ENCODE measurements at regions of chr1 and their contacts with region 1.

Region 1: DNA sequence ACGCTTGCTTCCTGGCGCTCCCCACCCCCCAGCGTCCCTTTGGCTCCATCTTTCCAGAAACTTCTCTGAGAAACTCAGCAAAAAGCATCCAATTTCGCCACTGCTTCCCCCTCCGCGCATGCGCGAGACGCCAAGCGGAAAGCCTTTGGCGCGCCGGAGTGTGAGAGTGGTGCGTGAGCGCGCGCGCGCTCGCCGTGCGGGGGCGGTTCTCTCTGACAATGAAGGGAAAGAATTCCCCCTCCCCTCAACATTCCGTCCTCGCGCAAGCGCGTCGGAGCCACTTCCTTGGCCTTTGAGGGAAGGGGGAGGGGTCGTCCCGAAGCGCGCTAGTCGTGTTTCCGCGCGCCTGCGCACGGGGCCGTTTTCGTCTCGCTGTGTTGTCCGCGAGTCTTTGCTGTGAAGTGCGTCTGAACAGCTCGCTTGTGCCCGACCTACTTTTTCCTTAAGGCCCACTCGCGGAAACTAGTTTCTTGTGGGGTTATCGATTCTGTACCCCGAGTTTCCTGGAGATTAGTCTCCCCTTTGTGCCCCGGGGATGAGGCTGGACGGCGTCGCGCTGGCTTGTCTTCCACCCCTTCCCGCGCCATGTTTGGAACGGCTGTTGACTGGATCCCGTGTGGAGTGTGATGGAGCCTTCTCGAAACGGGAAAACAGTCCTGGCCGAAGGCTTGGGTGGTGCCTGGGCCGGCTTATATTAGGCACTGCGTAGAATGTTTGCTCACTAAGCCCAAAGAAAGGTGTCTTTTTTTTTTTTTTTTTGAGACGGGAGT is 11.6 kb upstream of the SPEN start:
- DNase-seq: peak; percentile 100
- H3K4me3 ChIP-seq: peak overlapping the region in 2 of 3 experiments; percentile 58 to 66
- H3K27ac ChIP-seq: peak overlapping the region; percentile 95
- H3K4me1 ChIP-seq: peaks cover 3% of the 10 kb centered on the region
- H3K27me3 ChIP-seq: no peaks in the 10 kb centered on the region
- CTCF ChIP-seq: no peak
- POLR2A ChIP-seq: peak; percentile 85

Region 2: DNA sequence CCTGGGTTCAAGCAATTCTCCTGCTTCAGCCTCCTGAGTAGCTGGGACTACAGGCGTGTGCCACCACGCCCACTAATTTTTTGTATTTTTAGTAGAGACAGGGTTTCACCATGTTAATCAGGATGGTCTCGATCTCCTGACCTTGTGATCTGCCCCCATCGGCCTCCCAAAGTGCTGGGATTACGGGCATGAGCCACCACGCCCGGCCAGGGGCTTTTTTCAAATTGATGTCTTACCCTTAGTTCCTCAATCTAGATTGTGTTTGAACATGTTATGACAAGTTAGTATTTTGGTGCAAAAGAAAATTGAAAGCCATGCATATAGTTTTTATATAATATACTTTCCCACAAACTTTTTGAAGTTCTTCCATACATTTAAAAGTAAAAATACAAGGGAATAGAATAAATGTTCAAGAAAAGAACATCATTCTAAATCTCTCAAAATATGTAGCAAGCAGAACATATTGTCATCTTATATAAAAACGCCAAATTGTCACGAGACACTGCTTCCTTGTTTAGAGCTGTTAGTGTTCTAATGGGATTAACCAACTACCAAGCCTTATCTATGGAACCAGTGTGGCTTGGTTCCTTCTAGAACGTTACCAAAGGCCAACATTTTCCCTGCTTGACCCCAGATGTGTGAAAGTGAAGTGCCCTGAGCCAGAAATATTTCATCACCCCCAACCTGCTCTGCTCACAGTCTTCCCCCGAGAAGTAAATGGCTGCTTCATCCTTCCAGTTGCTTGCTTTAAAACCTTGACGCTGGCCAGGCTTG is 161.4 kb before region 1 on chr1:
- CTCF ChIA-PET with region 1: no interaction called
- POLR2A ChIA-PET with region 1: no interaction called
- dilution Hi-C with region 1: no loop called
- intact Hi-C with region 1: no loop called
- DNase-seq: no peak
- H3K4me3 ChIP-seq: no peak overlapping the region
- H3K27ac ChIP-seq: no peak overlapping the region
- H3K4me1 ChIP-seq: no peaks in the 10 kb centered on the region
- H3K27me3 ChIP-seq: no peaks in the 10 kb centered on the region
- CTCF ChIP-seq: no peak
- POLR2A ChIP-seq: no peak

Region 3: DNA sequence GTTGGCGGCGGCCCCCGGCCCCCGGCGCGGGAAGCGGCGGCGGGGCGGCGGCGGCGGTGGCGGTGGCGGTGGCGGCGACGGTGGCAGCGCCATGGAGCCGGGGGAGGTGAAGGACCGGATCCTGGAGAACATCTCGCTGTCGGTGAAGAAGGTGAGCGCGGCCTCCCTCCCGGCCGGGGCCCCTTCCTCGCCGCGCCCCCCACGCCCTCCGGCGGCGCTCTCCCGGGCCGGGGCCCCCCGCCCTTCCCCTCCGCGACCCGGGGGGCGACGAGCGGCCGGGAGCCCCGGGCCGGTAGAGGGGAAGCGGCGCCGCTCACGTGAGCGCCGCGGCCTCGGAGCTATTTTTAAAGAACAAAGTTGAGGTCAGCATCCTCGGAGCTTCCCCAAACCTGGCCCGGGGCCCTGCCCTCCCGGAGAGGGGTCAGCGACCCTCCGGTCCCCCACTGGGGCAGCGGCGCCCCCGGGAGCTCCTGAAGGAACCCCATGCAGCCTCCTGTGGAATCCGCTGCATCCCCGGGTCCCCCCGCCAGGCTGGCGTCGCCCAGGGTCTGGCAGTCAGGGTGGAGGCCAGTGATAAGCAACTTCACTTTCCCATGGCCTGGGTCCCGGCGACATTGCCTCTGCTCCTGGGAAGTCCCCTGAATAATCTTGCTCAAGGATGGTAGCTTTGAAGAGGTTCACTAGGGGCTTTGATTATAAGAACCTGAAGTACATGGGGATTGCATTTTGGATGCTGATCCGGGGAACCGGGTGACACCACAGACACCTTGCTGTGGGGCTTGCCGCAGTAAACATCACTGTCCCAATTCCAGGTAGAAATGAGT is 151.2 kb before region 1 on chr1:
- CTCF ChIA-PET with region 1: no interaction called
- POLR2A ChIA-PET with region 1: no interaction called
- dilution Hi-C with region 1: no loop called
- intact Hi-C with region 1: no loop called
- DNase-seq: peak; percentile 47
- H3K4me3 ChIP-seq: peak overlapping the region; percentile 61 to 87 (median 73)
- H3K27ac ChIP-seq: peak overlapping the region; percentile 70
- H3K4me1 ChIP-seq: peaks cover 7% of the 10 kb centered on the region
- H3K27me3 ChIP-seq: no peaks in the 10 kb centered on the region
- CTCF ChIP-seq: peak in 1 of 2 donors; percentile 8
- POLR2A ChIP-seq: no peak

Region 4: GRCh38 chr1:15797614-15798390 is 38.1 kb before region 1 on chr1:
- CTCF ChIA-PET with region 1: interaction called, 4 read pairs
- POLR2A ChIA-PET with region 1: interaction called, 3 read pairs
- dilution Hi-C with region 1: no loop called
- intact Hi-C with region 1: loop called (anchors 1 kb)
- DNase-seq: peak; percentile 30
- H3K4me3 ChIP-seq: no peak overlapping the region
- H3K27ac ChIP-seq: peak overlapping the region; percentile 88
- H3K4me1 ChIP-seq: peaks cover 56% of the 10 kb centered on the region
- H3K27me3 ChIP-seq: no peaks in the 10 kb centered on the region
- CTCF ChIP-seq: no peak
- POLR2A ChIP-seq: no peak

Region 5: DNA sequence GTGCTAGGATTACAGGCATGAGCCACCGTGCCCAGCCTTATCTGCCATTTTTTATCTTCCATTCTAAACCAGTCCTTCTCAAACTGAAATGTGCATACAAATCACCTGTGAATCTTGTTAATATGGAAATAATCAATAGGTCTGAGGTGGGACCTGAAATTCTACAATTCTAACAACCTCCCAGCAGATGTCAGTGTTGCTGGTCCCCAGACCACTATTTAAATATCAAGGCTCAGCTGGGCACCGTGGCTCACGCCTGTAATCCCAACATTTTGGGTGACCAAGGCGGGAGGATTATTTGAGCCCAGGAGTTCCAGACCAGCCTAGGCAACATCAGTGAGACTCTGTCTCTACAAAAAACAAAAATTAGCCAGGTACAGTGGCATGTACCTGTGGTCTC is 32.6 kb before region 1 on chr1:
- CTCF ChIA-PET with region 1: interaction called, 3 read pairs
- POLR2A ChIA-PET with region 1: no interaction called
- dilution Hi-C with region 1: no loop called
- intact Hi-C with region 1: loop called (anchors 1 kb)
- DNase-seq: peak; percentile 45
- H3K4me3 ChIP-seq: no peak overlapping the region
- H3K27ac ChIP-seq: no peak overlapping the region
- H3K4me1 ChIP-seq: peaks cover 25% of the 10 kb centered on the region
- H3K27me3 ChIP-seq: no peaks in the 10 kb centered on the region
- CTCF ChIP-seq: peak in 1 of 2 donors; percentile 40
- POLR2A ChIP-seq: no peak

Region 6: DNA sequence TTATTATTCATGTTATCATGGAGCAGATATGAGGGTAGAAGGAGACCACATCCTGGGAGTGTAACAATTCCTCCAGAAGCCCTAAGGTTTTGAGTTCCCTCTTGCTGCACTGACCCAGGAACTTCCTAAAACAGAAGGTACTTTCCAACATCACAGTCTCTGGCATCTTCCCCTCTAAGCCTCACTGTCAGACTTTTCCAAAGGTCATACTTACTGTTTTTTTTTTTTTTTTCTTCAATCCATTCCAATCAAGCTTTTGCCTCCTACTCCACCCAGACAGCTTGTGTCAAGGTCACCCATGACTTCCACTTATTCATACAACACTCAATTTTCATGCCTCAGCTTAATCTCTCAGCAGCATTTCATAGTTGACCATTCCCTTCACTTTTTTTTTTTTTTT is 10.1 kb before region 1 on chr1:
- CTCF ChIA-PET with region 1: interaction called, 9 read pairs
- POLR2A ChIA-PET with region 1: interaction called, 10 read pairs
- dilution Hi-C with region 1: no loop called
- intact Hi-C with region 1: no loop called
- DNase-seq: no peak
- H3K4me3 ChIP-seq: no peak overlapping the region
- H3K27ac ChIP-seq: no peak overlapping the region
- H3K4me1 ChIP-seq: no peaks in the 10 kb centered on the region
- H3K27me3 ChIP-seq: no peaks in the 10 kb centered on the region
- CTCF ChIP-seq: no peak
- POLR2A ChIP-seq: no peak

Region 7: DNA sequence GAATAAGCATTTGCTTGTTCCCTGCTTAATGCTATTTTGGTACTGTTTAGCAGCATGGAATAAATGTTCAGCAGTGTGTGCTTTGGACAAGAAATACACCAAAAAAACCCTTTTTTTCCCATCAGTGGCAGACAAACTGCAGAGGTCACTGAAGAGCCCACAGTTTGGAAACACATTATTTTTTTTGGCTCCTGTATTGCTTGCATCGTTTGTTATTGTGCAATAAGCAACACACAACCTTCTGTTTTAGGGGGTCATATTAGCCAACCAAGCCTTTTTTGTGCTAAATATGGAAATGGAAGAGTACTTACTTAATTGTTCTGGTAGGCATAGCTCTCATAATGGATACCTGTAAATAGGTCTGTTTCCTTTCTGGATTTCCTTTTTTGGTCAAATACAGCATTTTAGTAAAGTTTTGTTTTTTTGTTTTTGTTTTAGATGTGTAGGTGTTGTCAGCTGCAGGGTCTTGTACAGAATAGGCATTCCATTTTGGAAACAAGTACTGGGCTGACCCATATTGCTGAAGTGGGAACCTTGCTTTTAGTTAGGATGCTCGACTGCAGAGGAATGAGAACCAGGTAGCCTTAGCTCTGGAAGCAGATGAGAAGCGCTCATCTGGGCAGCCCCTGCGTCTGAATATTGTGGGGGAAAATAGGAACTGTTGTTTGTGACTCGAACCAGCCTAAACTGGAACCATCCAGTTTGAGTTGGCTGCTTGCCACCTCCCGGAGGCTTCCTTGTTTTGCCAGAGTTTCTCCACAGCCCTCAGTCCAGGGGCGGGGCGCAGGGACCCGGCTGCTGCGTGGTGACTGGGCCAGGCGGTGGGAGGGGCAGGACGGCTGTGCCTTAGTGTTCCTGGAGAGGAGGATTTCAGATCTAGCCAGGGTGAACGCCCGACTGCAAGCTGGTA is 50.0 kb after region 1 on chr1:
- CTCF ChIA-PET with region 1: no interaction called
- POLR2A ChIA-PET with region 1: no interaction called
- dilution Hi-C with region 1: no loop called
- intact Hi-C with region 1: loop called (anchors 1 kb)
- DNase-seq: peak; percentile 97
- H3K4me3 ChIP-seq: peak overlapping the region; percentile 26 to 68 (median 29)
- H3K27ac ChIP-seq: peak overlapping the region; percentile 90
- H3K4me1 ChIP-seq: peaks cover 27% of the 10 kb centered on the region
- H3K27me3 ChIP-seq: no peaks in the 10 kb centered on the region
- CTCF ChIP-seq: no peak
- POLR2A ChIP-seq: peak; percentile 70

Region 8: GRCh38 chr1:15997637-15998240 is 161.8 kb after region 1 on chr1:
- CTCF ChIA-PET with region 1: no interaction called
- POLR2A ChIA-PET with region 1: no interaction called
- dilution Hi-C with region 1: no loop called
- intact Hi-C with region 1: no loop called
- DNase-seq: no peak
- H3K4me3 ChIP-seq: no peak overlapping the region
- H3K27ac ChIP-seq: no peak overlapping the region
- H3K4me1 ChIP-seq: no peaks in the 10 kb centered on the region
- H3K27me3 ChIP-seq: peaks cover 0 to 2% of the 10 kb centered on the region in 2 experiments
- CTCF ChIP-seq: no peak
- POLR2A ChIP-seq: no peak

Measured in endothelial cell of umbilical vein (primary cell).